ENCODE measurements at regions of chr19 and their contacts with region 1.

Region 1: GRCh38 chr19:15418588-15419412 is at the start of gene AKAP8L:
- DNase-seq: peak; percentile 100
- H3K4me3 Mint-ChIP-seq: peak within 1 kb of the TSS; percentile 99
- H3K27ac Mint-ChIP-seq: peak within 1 kb of the TSS; percentile 98
- H3K4me1 Mint-ChIP-seq: peaks cover 34% of the 10 kb centered on the region
- H3K27me3 Mint-ChIP-seq: peaks cover 4% of the 10 kb centered on the region

Region 2: GRCh38 chr19:15379083-15379995 is 39.5 kb before region 1 on chr19 and contains the start of gene AKAP8:
- CTCF ChIA-PET with region 1: interaction called, 17 read pairs
- DNase-seq: peak; percentile 98
- H3K4me3 Mint-ChIP-seq: peak within 1 kb of the TSS; percentile 91
- H3K27ac Mint-ChIP-seq: peak within 1 kb of the TSS; percentile 99
- H3K4me1 Mint-ChIP-seq: peaks cover 39% of the 10 kb centered on the region
- H3K27me3 Mint-ChIP-seq: no peaks in the 10 kb centered on the region

Region 3: GRCh38 chr19:15432629-15433518 is 14.1 kb after region 1 on chr19:
- CTCF ChIA-PET with region 1: interaction called, 19 read pairs
- DNase-seq: peak; percentile 95
- H3K4me3 Mint-ChIP-seq: peak overlapping the region; percentile 86
- H3K27ac Mint-ChIP-seq: peak overlapping the region; percentile 94
- H3K4me1 Mint-ChIP-seq: peaks cover 38% of the 10 kb centered on the region
- H3K27me3 Mint-ChIP-seq: no peaks in the 10 kb centered on the region

Region 4: DNA sequence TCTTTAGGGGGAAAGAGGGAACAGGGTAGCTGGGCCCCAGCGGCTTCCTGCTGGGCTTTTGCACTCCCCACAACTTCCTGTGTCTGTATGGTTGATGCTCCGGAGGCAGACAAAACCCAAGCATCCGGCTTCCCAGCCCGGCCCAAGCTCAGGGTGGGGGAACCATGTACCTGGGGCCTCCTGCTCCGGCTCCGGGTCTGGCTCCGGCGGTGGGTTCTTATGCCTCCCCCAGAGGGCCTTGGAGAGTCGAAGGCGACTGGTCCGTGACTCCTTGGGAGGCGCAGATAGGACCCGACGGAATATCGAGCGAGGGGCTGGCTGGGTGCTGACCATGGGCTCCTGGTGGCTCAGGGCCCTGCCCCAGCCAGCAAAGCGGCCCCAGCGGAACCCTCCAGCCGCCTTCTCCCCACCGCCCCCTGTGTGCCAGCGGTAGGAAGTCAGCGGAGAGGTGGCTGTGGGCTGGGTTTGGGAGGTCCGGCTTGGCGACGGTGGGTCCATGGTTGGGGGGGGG is 45.1 kb after region 1 on chr19:
- CTCF ChIA-PET with region 1: interaction called, 23 read pairs
- DNase-seq: peak; percentile 90
- H3K4me3 Mint-ChIP-seq: peak overlapping the region; percentile 87
- H3K27ac Mint-ChIP-seq: peak overlapping the region; percentile 96
- H3K4me1 Mint-ChIP-seq: peaks cover 71% of the 10 kb centered on the region
- H3K27me3 Mint-ChIP-seq: peaks cover 6% of the 10 kb centered on the region

Region 5: GRCh38 chr19:15498911-15499317 is 80.1 kb after region 1 on chr19:
- CTCF ChIA-PET with region 1: no interaction called
- DNase-seq: no peak
- H3K4me3 Mint-ChIP-seq: no peak overlapping the region
- H3K27ac Mint-ChIP-seq: no peak overlapping the region
- H3K4me1 Mint-ChIP-seq: peaks cover 10% of the 10 kb centered on the region
- H3K27me3 Mint-ChIP-seq: peaks cover 41% of the 10 kb centered on the region

Region 6: DNA sequence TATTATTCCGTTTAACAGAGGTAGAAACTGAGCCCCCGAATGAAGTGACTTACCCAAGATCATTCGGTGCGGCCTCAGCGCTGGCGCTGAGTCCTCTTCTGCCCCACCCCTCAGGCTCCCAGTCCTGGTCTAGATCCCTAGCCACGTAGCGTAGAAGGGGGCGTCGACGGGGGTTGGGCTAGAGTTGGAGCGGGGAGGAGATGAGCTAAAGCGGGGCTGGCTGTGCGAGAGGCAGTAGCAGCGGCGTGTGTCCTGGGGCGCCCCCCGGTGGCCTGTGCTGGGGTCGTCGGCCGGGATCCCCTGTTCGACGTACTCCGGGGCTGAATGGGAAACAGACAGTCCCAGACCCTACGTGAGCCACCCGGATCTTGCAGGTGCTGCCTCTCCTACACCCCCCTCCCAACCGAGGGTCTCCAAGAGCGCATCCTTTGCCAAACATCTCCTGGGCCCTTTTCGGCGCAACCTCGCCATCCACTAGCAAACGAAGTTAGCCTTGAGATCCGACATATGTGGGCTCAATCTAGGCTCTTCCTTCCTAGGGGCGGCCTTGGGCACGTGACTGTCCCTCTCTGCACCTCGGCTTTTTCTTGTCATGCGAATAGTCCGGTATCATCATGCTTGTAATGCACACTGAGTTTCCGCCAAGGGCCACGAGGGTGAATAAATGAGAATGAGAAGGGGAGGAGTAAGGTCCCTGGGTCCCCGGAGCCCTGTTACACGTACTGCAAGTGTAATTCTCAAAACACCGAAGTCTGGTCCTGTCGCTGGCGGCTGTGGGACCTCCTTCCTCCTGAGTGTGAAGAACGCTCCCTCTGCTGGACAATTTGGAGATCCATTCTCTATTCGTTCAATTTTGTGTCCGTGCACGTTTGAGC is 137.2 kb after region 1 on chr19:
- CTCF ChIA-PET with region 1: interaction called, 152 read pairs
- DNase-seq: peak; percentile 98
- H3K4me3 Mint-ChIP-seq: peak overlapping the region; percentile 72
- H3K27ac Mint-ChIP-seq: peak overlapping the region; percentile 84
- H3K4me1 Mint-ChIP-seq: peaks cover 31% of the 10 kb centered on the region
- H3K27me3 Mint-ChIP-seq: peaks cover 55% of the 10 kb centered on the region

Region 7: GRCh38 chr19:15587663-15588062 is 168.9 kb after region 1 on chr19:
- CTCF ChIA-PET with region 1: no interaction called
- DNase-seq: no peak
- H3K4me3 Mint-ChIP-seq: no peak overlapping the region
- H3K27ac Mint-ChIP-seq: no peak overlapping the region
- H3K4me1 Mint-ChIP-seq: peaks cover 3% of the 10 kb centered on the region
- H3K27me3 Mint-ChIP-seq: peaks cover 30% of the 10 kb centered on the region

Measured in activated naive CD4-positive, alpha-beta T cell treated with anti-CD3 and anti-CD28 coated beads, Interleukin-2, amount 10 ng/mL, durations not matched to agents 7 days and 5 days (primary cell).